Aorta (tissue), 5 donors: ENCODE measurements at regions of chr14 and their contacts with region 1.

Region 1: GRCh38 chr14:37150414-37150813 is 22.0 kb downstream of the SLC25A21 start:
- DNase-seq: no peak
- ATAC-seq: peak; percentile 73
- H3K4me3 ChIP-seq: no peak overlapping the region
- H3K27ac ChIP-seq: no peak overlapping the region
- H3K4me1 ChIP-seq: no peaks in the 10 kb centered on the region
- H3K27me3 ChIP-seq: no peaks in the 10 kb centered on the region

Region 2: DNA sequence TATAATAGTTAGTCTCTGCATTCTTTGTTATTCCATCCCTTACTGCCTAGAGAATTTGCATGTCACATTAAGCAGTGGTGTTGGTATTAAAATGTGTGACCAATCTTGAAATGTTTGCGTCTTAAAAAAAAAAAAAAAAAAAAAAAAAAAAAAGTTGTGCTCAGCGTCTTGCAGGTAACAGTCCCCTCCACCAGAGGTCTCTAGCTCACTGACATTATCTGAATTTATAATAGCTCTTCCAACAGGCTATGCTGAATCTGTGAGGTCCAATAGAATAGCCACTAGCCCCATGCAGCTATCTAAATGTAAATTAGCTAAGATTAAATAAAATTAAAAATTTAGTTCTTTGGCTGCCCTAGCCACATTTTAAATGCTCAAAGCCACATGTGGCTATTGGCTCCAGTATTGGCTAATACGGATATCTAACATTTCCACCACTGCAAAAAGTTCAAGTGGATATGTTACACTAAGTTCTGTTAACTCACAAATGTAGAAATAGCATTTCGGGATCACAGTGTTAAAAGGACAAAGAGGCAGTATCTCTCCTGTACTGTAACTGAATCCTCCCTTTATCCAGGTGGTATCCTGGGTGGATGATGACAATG is 596.7 kb before region 1 on chr14:
- intact Hi-C with region 1: loop called (anchors 5 kb)
- DNase-seq: no peak
- ATAC-seq: no peak
- H3K4me3 ChIP-seq: no peak overlapping the region
- H3K27ac ChIP-seq: no peak overlapping the region
- H3K4me1 ChIP-seq: no peaks in the 10 kb centered on the region
- H3K27me3 ChIP-seq: no peaks in the 10 kb centered on the region

Region 3: DNA sequence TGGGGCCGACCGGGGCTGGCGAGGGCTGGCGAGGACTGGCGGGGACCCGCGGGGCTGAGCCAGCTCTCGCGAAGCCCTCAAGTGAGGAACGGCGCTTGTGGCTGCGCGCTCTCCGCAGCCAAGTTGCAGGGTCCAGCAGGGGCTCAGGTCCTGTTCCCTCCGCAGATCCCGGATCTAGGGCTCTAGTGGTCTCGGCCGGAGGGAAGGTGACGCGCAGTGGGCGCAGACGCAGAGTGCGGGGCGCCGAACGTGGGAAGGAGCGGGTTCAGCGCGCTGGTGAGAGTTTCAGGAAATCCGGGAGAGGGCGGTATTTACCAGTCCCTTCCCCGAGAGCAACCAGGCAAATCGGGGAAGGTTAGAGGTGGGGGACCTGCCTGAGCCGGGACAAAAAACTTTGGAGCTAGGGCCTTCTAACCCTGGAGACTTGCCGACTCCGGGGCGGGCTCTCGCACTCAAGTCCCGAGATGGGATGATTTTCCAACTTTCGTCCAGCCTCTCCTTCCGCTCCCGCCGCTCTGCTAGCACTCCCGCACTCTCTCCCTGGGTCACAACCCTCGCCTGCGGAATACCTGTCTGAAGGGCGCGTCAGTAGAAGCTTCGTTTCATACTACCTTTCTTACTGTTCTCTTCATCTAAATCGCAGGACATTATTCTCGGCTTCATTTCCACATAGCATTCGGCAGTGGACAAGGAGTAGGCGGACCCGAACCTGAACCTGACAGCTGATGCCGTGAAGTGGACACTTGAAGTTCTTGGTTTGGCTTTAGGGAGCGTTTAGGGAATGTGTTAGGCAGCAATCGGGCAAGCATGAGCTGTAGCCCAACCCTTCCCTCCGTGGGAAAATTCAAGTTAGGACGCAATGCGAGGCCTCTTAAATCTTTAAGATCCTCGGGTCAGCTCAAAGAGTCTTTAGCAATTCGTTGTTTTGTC is 502.3 kb before region 1 on chr14:
- intact Hi-C with region 1: loop called (anchors 2 kb)
- DNase-seq: peak in 1 of 2 donors; percentile 78
- ATAC-seq: peak; percentile 84
- H3K4me3 ChIP-seq: peak overlapping the region in 1 of 2 donors; percentile 9
- H3K27ac ChIP-seq: no peak overlapping the region
- H3K4me1 ChIP-seq: no peaks in the 10 kb centered on the region
- H3K27me3 ChIP-seq: peaks cover 0 to 3% of the 10 kb centered on the region in 2 donors

Region 4: DNA sequence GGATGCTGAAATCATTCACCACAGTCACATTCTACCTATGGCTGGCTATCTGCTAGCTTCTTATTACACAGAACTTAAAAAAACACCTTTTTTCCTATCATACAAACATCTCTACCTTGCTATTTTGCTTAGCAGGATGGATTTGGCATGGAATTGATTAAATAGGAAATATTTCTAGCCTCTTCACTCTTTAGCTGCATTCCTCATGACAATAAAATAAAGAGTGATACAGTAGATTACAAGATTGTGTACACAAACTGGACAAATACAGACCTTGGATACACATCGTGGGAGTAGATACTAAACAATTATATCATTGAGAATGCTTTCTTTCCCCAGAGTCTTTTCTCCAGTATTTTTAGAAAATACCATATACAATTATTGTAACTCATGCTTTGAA is 37.3 kb before region 1 on chr14:
- intact Hi-C with region 1: no loop called
- DNase-seq: no peak
- ATAC-seq: no peak
- H3K4me3 ChIP-seq: no peak overlapping the region
- H3K27ac ChIP-seq: no peak overlapping the region
- H3K4me1 ChIP-seq: no peaks in the 10 kb centered on the region
- H3K27me3 ChIP-seq: no peaks in the 10 kb centered on the region

Region 5: DNA sequence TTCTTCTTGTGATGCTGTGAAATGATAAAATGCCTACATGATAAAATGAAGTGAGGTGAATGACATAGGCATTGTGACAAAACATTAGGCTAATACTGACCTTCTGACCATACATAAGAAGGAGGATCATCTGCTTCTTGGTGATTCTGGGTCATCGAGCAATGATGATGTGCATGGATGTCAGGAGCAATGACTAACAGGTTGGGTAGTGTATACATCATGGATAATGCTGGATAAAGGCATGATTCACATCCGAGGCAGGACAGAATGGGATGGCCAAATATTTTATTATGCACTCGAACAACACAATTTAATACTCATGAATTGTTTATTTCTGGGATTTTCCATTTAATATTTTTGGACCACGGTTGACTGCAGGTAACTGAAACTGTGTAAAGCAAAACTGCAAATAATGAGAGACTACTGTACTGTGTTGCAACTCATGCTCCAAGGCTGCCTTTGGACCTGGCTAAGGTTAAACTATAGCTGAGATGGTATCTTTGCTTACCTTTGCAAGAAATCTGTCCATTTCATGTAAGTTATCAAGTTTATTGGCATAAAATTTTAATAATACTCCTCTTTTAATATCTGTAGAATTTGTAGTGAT is 29.6 kb after region 1 on chr14:
- intact Hi-C with region 1: no loop called
- DNase-seq: no peak
- ATAC-seq: no peak
- H3K4me3 ChIP-seq: no peak overlapping the region
- H3K27ac ChIP-seq: no peak overlapping the region
- H3K4me1 ChIP-seq: no peaks in the 10 kb centered on the region
- H3K27me3 ChIP-seq: no peaks in the 10 kb centered on the region